WTC11 (cell line): ENCODE measurements at regions of chr18 and their contacts with region 1.

Region 1: DNA sequence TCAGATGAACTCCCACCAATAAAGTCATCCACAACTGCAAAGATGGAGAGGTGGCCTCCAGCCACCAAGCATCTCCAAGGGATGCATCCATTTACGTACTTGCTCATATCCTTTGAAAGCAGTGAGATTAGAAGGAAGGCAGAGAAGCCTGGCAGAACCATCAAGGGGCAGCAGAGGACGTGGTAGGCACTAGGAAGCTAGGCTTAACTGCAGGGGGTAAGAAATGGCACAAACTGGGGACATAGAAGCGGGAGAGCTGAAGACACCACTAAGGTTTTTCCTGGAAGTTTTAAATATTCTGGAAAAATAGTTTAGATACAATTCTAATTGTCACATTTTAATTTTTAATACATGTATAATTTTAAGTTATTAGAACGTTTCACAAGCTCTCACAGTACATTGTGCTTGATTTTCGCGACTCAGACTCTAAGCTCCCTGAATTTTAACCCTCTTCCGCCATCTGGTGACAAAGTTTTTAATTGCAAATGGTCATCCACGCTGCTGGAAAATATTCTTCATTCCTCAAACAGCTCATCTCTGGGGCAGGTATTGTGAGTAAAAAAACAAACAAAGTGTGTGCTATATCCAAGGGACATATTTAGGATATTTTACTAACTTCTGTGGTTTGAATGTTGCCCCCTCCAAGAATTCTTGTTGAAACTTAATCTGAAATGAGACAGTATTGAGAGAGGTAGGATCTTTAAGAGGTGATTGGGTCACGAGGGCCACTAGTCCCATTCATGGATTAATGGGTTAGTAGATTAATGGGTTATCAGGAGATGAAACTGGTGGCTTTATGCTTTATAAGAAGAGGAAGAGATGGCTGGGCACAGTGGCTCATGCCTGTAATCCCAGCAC is 1.6 kb upstream of the PSTPIP2 start:
- DNase-seq: peak; percentile 36
- ATAC-seq: peak; percentile 27
- H3K4me3 Mint-ChIP-seq: peak overlapping the region; percentile 46; the same call in 1 of the 2 replicates
- H3K27ac Mint-ChIP-seq: no peak overlapping the region
- H3K4me1 Mint-ChIP-seq: peaks cover 7% of the 10 kb centered on the region; the same call in 1 of the 2 replicates
- H3K27me3 Mint-ChIP-seq: peaks cover 37% of the 10 kb centered on the region
- CTCF ChIP-seq: peak; percentile 32; the same call in 1 of the 2 replicates

Region 2: GRCh38 chr18:45879681-45880655 is 193.7 kb before region 1 on chr18:
- CTCF ChIA-PET with region 1: interaction called, 28 read pairs
- POLR2A ChIA-PET with region 1: no interaction called
- DNase-seq: peak; percentile 83
- ATAC-seq: peak; percentile 99
- H3K4me3 Mint-ChIP-seq: no peak overlapping the region
- H3K27ac Mint-ChIP-seq: peak overlapping the region; percentile 58
- H3K4me1 Mint-ChIP-seq: peaks cover 14% of the 10 kb centered on the region
- H3K27me3 Mint-ChIP-seq: no peaks in the 10 kb centered on the region
- CTCF ChIP-seq: peak; percentile 93

Region 3: DNA sequence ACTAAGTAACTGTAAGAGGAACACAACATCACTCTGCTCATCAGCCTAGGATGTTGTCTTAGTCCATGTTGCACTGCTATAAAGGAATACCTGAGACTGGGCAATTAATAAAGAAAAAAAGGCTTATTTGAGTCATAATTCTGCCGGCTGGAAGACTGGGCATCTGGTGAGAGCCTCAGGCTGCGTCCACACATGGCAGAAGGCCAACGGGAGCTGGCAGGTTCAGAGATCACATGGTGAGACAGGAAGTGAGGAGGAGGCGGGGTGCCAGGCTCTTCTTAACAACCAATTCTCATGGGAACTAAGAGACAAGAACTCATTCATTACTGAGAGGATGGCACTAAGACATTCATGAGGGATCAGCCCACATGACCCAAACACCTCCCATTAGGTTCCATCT is 153.3 kb before region 1 on chr18:
- CTCF ChIA-PET with region 1: interaction called, 23 read pairs
- POLR2A ChIA-PET with region 1: no interaction called
- DNase-seq: no peak
- ATAC-seq: no peak
- H3K4me3 Mint-ChIP-seq: no peak overlapping the region
- H3K27ac Mint-ChIP-seq: no peak overlapping the region
- H3K4me1 Mint-ChIP-seq: no peaks in the 10 kb centered on the region
- H3K27me3 Mint-ChIP-seq: no peaks in the 10 kb centered on the region
- CTCF ChIP-seq: no peak

Region 4: GRCh38 chr18:45974088-45974536 is 99.6 kb before region 1 on chr18:
- CTCF ChIA-PET with region 1: interaction called, 34 read pairs
- POLR2A ChIA-PET with region 1: interaction called, 8 read pairs
- DNase-seq: peak; percentile 40
- ATAC-seq: peak; percentile 36
- H3K4me3 Mint-ChIP-seq: no peak overlapping the region
- H3K27ac Mint-ChIP-seq: no peak overlapping the region
- H3K4me1 Mint-ChIP-seq: peaks cover 15% of the 10 kb centered on the region
- H3K27me3 Mint-ChIP-seq: peaks cover 10% of the 10 kb centered on the region
- CTCF ChIP-seq: no peak

Region 5: GRCh38 chr18:46042571-46043123 is 31.1 kb before region 1 on chr18:
- CTCF ChIA-PET with region 1: interaction called, 12 read pairs
- POLR2A ChIA-PET with region 1: no interaction called
- DNase-seq: no peak
- ATAC-seq: no peak
- H3K4me3 Mint-ChIP-seq: no peak overlapping the region
- H3K27ac Mint-ChIP-seq: no peak overlapping the region
- H3K4me1 Mint-ChIP-seq: peaks cover 11% of the 10 kb centered on the region
- H3K27me3 Mint-ChIP-seq: no peaks in the 10 kb centered on the region
- CTCF ChIP-seq: no peak

Region 6: GRCh38 chr18:46061387-46061786 is 12.3 kb before region 1 on chr18:
- CTCF ChIA-PET with region 1: interaction called, 10 read pairs
- POLR2A ChIA-PET with region 1: no interaction called
- DNase-seq: no peak
- ATAC-seq: no peak
- H3K4me3 Mint-ChIP-seq: no peak overlapping the region
- H3K27ac Mint-ChIP-seq: no peak overlapping the region
- H3K4me1 Mint-ChIP-seq: peaks cover 2% of the 10 kb centered on the region; the same call in 1 of the 2 replicates
- H3K27me3 Mint-ChIP-seq: no peaks in the 10 kb centered on the region
- CTCF ChIP-seq: no peak

Region 7: DNA sequence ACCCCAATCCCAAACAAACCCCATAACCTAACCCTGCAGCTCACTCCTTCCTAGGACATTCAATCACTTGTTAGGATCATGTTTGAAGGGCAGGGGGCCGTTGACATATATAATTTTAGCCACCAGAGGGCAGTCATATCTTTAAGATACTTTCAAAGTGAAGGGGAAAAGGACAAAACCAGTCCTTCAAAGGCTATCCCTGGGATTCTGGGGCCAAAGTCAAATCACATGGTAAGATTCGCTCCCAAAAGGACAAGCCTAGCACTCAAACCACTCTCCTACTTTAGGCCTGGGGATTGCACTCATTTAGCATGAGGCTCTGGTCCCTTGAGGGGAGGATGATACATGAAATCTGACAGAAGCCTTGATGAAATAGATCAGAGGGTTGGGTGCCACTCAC is 75.1 kb after region 1 on chr18:
- CTCF ChIA-PET with region 1: no interaction called
- POLR2A ChIA-PET with region 1: no interaction called
- DNase-seq: peak; percentile 66
- ATAC-seq: peak; percentile 67
- H3K4me3 Mint-ChIP-seq: no peak overlapping the region
- H3K27ac Mint-ChIP-seq: 0 out of 2 replicates have a peak overlapping the region, but pooled peaks have one; percentile 20
- H3K4me1 Mint-ChIP-seq: peaks cover 29% of the 10 kb centered on the region
- H3K27me3 Mint-ChIP-seq: no peaks in the 10 kb centered on the region
- CTCF ChIP-seq: peak; percentile 68

Region 8: GRCh38 chr18:46333431-46334135 is 259.9 kb after region 1 on chr18:
- CTCF ChIA-PET with region 1: no interaction called
- POLR2A ChIA-PET with region 1: no interaction called
- DNase-seq: peak; percentile 50
- ATAC-seq: peak; percentile 21
- H3K4me3 Mint-ChIP-seq: peak overlapping the region; percentile 72
- H3K27ac Mint-ChIP-seq: no peak overlapping the region
- H3K4me1 Mint-ChIP-seq: peaks cover 43% of the 10 kb centered on the region
- H3K27me3 Mint-ChIP-seq: peaks cover 23% of the 10 kb centered on the region
- CTCF ChIP-seq: no peak